Aorta (tissue), 5 donors: ENCODE measurements at regions of chr1 and their contacts with region 1.

Region 1: GRCh38 chr1:151459331-151460046 is at the start of gene POGZ:
- DNase-seq: peak; percentile 99
- ATAC-seq: peak; percentile 97
- H3K4me3 ChIP-seq: peak within 1 kb of the TSS; percentile 99 to 100
- H3K27ac ChIP-seq: peak within 1 kb of the TSS; percentile 98
- H3K4me1 ChIP-seq: no peaks in the 10 kb centered on the region
- H3K27me3 ChIP-seq: no peaks in the 10 kb centered on the region
- total RNA-seq, gene POGZ: 96.0 to 144 TPM

Region 2: DNA sequence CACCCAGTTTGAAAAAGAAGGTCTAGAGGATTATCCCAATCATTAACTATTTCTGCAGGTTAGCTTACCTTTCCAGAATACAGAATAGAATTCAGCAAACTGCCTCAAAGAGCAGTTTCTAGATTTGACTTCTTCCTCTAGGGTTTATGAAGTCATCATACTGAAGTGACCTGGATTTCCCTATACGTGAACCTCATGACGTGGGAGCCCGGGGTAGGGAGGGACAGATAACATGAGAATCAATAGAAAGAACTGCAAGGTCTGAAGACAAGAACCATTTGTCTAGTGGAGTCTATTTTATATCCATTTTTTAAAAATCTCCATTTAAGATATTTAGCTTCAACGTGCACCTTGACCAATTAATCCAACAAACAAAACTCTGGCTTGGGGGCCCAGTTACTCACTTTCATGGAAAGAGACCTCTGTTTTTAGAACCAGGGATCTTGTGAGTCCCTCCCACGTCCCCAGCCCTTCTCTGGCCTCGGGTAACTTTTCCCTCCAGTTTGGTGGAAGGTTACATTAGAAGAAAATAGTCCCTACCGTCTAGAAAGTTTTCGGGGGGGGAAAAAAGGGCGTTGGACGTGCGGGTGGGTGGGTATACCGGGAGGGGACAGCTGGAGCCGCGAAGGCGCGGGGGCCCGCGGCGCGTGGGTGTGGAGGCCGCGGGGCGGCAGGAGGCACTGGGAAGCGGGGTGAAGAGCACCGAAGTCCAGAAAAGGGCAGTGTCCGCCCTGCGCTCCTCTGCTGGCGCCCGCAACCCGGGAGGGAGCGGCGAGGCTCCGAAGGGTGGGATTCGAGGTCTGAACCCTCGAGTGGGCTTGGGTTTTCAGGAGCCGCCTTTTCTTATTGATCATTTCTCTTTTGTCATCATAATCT is 13.6 kb after region 1 on chr1:
- intact Hi-C with region 1: loop called (anchors 1 kb)
- DNase-seq: peak; percentile 53 to 83
- ATAC-seq: peak; percentile 76
- H3K4me3 ChIP-seq: peak overlapping the region; percentile 23 to 83
- H3K27ac ChIP-seq: peak overlapping the region; percentile 5 to 43
- H3K4me1 ChIP-seq: no peaks in the 10 kb centered on the region
- H3K27me3 ChIP-seq: no peaks in the 10 kb centered on the region